Vagina (tissue), 2 donors: ENCODE measurements at regions of chr1 and their contacts with region 1.

Region 1: DNA sequence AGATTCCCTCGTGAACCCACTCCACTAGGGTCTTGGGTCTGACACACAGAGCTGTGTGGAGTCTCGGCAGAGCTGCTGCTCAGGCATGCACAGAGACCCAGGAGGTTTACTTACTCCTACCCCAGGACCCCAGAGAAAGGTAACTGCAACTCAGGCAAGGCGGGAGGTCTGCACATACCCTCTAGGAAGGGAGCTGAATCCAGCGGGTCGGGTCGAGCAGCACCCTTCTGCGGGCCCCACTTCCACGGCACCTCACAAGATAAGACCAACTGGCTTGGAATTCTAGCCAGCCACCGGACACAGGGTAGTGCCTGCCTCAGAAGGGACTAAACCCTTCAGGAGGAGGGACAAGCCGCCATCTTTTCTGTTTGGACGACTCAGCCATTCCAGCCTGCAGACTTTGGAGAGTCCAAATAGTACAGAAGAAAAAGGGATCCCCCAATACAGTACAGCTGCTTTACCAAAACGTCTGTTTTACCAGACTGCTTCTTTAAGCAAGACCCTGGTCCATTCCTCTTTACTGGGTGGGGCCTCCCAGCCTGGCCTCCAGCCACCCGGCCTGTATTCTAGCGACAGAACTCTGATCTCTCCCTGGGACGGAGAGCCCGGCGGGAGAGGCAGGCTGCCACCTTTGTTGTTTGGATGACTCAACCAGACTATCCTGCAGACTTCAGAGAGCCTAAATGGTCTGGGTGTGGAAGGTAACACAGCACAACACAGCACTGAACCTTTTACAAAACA is 554.5 kb upstream of the BEND5 start:
- DNase-seq: no peak
- H3K4me3 ChIP-seq: no peak overlapping the region
- H3K27ac ChIP-seq: no peak overlapping the region
- H3K4me1 ChIP-seq: no peaks in the 10 kb centered on the region
- H3K27me3 ChIP-seq: no peaks in the 10 kb centered on the region
- CTCF ChIP-seq: no peak
- POLR2A ChIP-seq: no peak

Region 2: DNA sequence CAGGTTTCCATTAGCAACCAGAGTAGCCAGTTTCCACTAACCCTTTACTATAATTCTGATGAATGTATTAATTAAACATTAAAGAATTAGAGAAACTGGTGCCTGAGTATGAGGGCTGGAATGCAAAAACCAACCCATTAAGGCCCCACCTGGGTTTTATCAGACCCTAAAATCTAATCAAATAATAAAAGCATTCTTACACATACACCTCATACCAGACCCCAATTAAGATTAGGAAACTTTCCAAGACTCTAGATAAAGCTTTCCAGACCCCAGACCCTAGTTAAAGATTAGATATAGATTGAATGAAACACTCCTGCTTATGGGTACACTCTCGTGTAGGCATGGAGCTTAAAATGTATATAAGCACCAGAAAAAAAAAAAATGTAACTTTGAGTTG is 26.8 kb after region 1 on chr1:
- intact Hi-C with region 1: loop called (anchors 2 kb)
- DNase-seq: no peak
- H3K4me3 ChIP-seq: no peak overlapping the region
- H3K27ac ChIP-seq: no peak overlapping the region
- H3K4me1 ChIP-seq: no peaks in the 10 kb centered on the region
- H3K27me3 ChIP-seq: no peaks in the 10 kb centered on the region
- CTCF ChIP-seq: no peak
- POLR2A ChIP-seq: no peak

Region 3: DNA sequence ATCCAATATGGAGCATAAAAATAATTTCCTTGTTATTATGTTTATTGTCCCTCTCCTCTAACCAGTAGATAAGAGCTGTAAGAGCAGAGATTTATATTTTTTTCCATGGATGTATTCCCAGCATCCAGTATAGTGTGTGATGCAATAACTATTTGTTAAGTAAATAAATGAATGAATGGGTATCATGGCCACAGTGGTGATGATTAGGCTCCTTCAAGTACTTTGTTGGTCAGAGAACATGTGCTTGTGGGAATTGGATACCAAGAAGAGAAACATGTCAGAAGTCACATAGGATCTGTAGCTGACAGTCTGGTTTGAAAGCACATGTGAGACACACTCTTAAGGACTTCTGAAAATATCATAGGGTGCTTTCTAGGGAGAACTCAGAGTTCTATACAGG is 104.1 kb after region 1 on chr1:
- intact Hi-C with region 1: no loop called
- DNase-seq: no peak
- H3K4me3 ChIP-seq: no peak overlapping the region
- H3K27ac ChIP-seq: no peak overlapping the region
- H3K4me1 ChIP-seq: no peaks in the 10 kb centered on the region
- H3K27me3 ChIP-seq: no peaks in the 10 kb centered on the region
- CTCF ChIP-seq: no peak
- POLR2A ChIP-seq: no peak